Sigmoid colon (tissue), 7 donors: ENCODE measurements at regions of chr11 and their contacts with region 1.

Region 1: GRCh38 chr11:111230122-111230465 is 15.4 kb upstream of the POU2AF2 start:
- DNase-seq: no peak
- H3K4me3 ChIP-seq: peak overlapping the region in 2 of 4 donors; percentile 42 to 48
- H3K27ac ChIP-seq: no peak overlapping the region
- H3K4me1 ChIP-seq: peaks cover 0 to 9% (median 3%) of the 10 kb centered on the region in 4 donors
- H3K27me3 ChIP-seq: no peaks in the 10 kb centered on the region
- CTCF ChIP-seq: no peak
- EP300 ChIP-seq: no peak
- POLR2A ChIP-seq: no peak

Region 2: GRCh38 chr11:110447897-110448745 is 782.0 kb before region 1 on chr11:
- intact Hi-C with region 1: loop called (anchors 5 kb)
- DNase-seq: no peak
- H3K4me3 ChIP-seq: no peak overlapping the region
- H3K27ac ChIP-seq: no peak overlapping the region
- H3K4me1 ChIP-seq: peaks cover 0 to 34% (median 15%) of the 10 kb centered on the region in 4 donors
- H3K27me3 ChIP-seq: no peaks in the 10 kb centered on the region
- CTCF ChIP-seq: peak in 2 of 4 experiments; percentile 21 to 39
- EP300 ChIP-seq: no peak
- POLR2A ChIP-seq: no peak

Region 3: DNA sequence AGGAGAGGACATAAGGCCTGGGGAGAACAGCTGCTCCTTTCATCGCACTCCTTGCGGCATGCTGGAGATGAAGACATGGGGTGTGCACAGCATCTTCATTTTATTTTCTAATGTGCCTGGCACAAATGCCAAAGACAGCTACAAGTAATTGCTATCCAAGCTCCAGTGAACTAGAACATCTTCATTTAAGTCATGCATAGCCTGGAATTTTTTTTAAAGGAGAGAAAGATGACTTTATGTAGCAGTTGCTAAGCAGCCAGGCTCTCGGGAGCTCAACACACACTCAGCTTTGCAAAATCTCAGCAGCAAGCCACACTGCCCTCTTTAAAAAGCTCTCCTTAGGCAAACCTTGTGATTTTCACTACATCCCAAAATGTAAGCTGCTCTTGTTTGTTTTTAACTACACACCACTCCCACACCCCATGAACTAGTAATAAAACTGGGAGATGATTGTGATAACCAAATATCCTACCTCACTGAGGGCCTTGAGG is 149.0 kb before region 1 on chr11:
- intact Hi-C with region 1: no loop called
- DNase-seq: no peak
- H3K4me3 ChIP-seq: no peak overlapping the region
- H3K27ac ChIP-seq: no peak overlapping the region
- H3K4me1 ChIP-seq: peaks cover 0 to 13% (median 8%) of the 10 kb centered on the region in 4 donors
- H3K27me3 ChIP-seq: no peaks in the 10 kb centered on the region
- CTCF ChIP-seq: no peak
- EP300 ChIP-seq: no peak
- POLR2A ChIP-seq: no peak

Region 4: DNA sequence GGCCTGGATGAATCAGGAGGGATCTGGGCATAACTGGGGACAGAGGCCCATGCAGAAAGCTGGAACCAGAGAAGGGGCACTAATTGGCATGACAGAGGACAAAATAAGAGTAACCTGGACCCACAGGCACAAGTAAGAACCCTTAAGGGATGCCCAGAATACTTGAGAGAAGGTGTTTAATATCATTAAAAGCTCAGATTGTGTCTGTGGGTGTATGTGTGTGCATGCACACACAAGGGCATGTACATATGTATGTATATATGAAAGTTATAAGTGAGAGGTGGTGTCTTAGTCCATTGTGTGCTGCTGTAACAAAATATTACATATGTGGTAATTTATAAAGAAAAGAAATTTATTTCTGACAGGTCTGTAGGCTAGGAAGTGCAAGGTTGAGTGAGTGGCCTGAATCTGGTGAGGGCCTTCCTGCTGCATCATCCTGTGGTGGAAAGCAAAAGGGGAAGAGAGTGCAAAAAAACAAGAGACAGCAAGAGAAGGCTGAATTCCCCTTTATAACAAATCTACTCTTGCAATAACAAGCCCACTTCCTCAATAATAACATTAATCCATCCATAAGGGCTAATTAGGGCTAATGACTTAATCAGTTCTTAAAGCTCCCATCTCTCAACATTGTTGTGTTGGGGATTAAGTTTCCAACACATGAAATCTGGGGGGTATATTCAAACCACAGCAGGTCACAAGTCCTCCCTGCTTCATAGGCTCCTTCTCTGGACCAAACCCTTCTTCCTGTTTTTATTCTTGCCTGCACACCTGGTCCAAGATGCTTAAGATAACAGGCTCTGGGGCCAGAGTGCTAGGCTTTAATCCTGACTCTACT is 52.8 kb before region 1 on chr11:
- intact Hi-C with region 1: no loop called
- DNase-seq: no peak
- H3K4me3 ChIP-seq: no peak overlapping the region
- H3K27ac ChIP-seq: no peak overlapping the region
- H3K4me1 ChIP-seq: no peaks in the 10 kb centered on the region
- H3K27me3 ChIP-seq: no peaks in the 10 kb centered on the region
- CTCF ChIP-seq: no peak
- EP300 ChIP-seq: no peak
- POLR2A ChIP-seq: no peak

Region 5: GRCh38 chr11:111336582-111337256 is 106.6 kb after region 1 on chr11:
- intact Hi-C with region 1: no loop called
- DNase-seq: no peak
- H3K4me3 ChIP-seq: no peak overlapping the region
- H3K27ac ChIP-seq: no peak overlapping the region
- H3K4me1 ChIP-seq: peaks cover 0 to 27% (median 16%) of the 10 kb centered on the region in 4 donors
- H3K27me3 ChIP-seq: no peaks in the 10 kb centered on the region
- CTCF ChIP-seq: no peak
- EP300 ChIP-seq: no peak
- POLR2A ChIP-seq: no peak